ENCODE measurements at regions of chr1 and their contacts with region 1.

Region 1: DNA sequence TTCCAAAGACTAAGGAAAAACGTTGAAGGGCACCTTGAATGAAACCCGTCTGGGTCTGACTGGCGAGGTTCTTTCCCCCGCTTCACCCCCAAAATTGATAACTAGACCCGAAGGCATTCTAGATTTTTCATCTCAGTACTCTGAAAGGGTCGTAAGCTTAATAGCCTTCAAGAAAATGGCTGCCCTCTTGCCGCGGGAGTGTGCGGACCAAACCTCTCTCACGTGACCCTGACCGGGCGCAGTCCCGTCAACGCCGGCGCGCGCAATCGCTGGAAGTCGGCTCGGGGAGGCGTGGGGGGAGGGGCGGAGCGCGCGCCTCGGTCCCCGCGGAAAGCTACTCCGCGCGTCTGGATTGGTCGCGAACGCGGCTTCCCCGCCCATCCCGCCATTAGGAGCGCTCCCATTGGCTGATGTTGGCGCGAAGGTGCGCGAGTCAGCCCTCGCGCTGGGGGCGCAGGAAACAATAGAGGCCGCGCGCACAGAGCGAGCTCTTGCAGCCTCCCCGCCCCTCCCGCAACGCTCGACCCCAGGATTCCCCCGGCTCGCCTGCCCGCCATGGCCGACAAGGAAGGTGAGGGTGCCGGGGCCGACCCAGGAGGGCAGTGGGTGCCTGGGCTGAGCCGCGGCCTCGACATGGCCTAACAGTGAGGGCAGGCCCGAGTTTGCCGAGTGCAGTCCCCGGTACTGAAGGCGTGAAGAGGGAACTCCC is at the start of gene RBBP4:
- DNase-seq: peak; percentile 96 to 100 (median 99)
- ATAC-seq: peak; percentile 83
- H3K4me3 ChIP-seq: peak within 1 kb of the TSS; percentile 82 to 97
- H3K4me3 Mint-ChIP-seq: peak within 1 kb of the TSS; percentile 93
- H3K27ac ChIP-seq: peak within 1 kb of the TSS; percentile 98 to 99
- H3K27ac Mint-ChIP-seq: peak within 1 kb of the TSS; percentile 99
- H3K4me1 ChIP-seq: peaks cover 51% of the 10 kb centered on the region
- H3K4me1 Mint-ChIP-seq: peaks cover 60% of the 10 kb centered on the region
- H3K27me3 ChIP-seq: no peaks in the 10 kb centered on the region
- H3K27me3 Mint-ChIP-seq: no peaks in the 10 kb centered on the region
- CTCF ChIP-seq: no peak
- total RNA-seq, gene RBBP4: 109 to 121 TPM

Region 2: DNA sequence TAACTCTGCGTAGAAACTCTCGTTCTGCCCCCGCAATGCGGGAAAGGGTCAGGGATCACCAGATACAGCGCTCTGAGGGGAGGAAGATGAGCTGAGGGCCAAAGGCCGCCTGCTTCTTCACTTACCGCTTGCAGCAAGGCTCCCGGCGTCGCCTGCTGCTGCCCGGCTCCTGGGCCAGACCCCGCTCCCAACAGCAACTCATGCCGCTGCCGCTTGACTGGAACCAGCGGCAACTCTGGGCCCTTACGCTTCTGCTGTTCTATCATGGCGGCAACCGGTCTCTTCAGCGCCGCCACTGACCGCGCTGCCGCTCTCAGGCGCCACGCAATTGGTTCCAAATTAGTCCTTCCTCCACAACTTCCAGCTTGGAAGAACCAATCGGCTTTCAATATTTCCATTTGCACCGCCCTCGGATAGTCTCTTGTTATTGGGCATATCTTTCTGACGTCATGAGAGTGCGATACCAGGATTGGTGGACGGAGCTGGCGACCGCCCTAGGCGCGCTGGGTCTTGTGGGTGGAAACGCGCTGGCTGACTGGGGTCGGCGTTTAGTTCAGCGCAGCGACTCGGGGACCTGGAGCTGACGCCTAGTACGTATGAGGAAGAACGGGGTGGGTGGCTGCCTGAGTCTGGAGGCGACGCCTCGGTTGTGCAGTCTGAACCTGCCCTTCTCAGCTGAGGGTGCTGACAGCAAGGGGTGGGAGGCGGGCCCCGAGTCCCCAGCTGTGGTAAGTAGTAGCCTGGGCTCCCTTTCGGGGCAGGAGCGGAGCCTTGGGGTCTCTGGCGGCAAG is 1354.2 kb before region 1 on chr1 and contains the starts of genes SNRNP40 and ZCCHC17:
- CTCF ChIA-PET with region 1: no interaction called
- POLR2A ChIA-PET with region 1: no interaction called
- intact Hi-C with region 1: loop called in 1 of 2 experiments (anchors 10 kb)
- DNase-seq: peak; percentile 85 to 99 (median 91)
- ATAC-seq: peak; percentile 90
- H3K4me3 ChIP-seq: peak within 1 kb of the TSS; percentile 67 to 83
- H3K4me3 Mint-ChIP-seq: no peak within 1 kb of the TSS
- H3K27ac ChIP-seq: peak within 1 kb of the TSS; percentile 90 to 92
- H3K27ac Mint-ChIP-seq: no peak within 1 kb of the TSS
- H3K4me1 ChIP-seq: peaks cover 31% of the 10 kb centered on the region
- H3K4me1 Mint-ChIP-seq: peaks cover 35% of the 10 kb centered on the region
- H3K27me3 ChIP-seq: no peaks in the 10 kb centered on the region
- H3K27me3 Mint-ChIP-seq: no peaks in the 10 kb centered on the region
- CTCF ChIP-seq: no peak
- total RNA-seq, gene SNRNP40: 78.3 to 81.9 TPM
- total RNA-seq, gene ZCCHC17: 7.2 to 8.0 TPM

Region 3: GRCh38 chr1:32107742-32108661 is 542.9 kb before region 1 on chr1 and contains the start of gene KPNA6:
- CTCF ChIA-PET with region 1: interaction called, 3 read pairs
- POLR2A ChIA-PET with region 1: interaction called, 6 read pairs
- intact Hi-C with region 1: loop called in 1 of 2 experiments (anchors 2 kb)
- DNase-seq: peak; percentile 83 to 98 (median 90)
- ATAC-seq: peak; percentile 89
- H3K4me3 ChIP-seq: peak within 1 kb of the TSS; percentile 87 to 95
- H3K4me3 Mint-ChIP-seq: peak within 1 kb of the TSS; percentile 98
- H3K27ac ChIP-seq: peak within 1 kb of the TSS; percentile 84 to 93
- H3K27ac Mint-ChIP-seq: peak within 1 kb of the TSS; percentile 98
- H3K4me1 ChIP-seq: peaks cover 45% of the 10 kb centered on the region
- H3K4me1 Mint-ChIP-seq: peaks cover 50% of the 10 kb centered on the region
- H3K27me3 ChIP-seq: no peaks in the 10 kb centered on the region
- H3K27me3 Mint-ChIP-seq: no peaks in the 10 kb centered on the region
- CTCF ChIP-seq: no peak
- total RNA-seq, gene KPNA6: 51.7 to 58.7 TPM

Region 4: GRCh38 chr1:32179443-32180185 is 471.3 kb before region 1 on chr1 and contains the start of gene TXLNA:
- CTCF ChIA-PET with region 1: no interaction called
- POLR2A ChIA-PET with region 1: no interaction called
- intact Hi-C with region 1: loop called in 1 of 2 experiments (anchors 2 kb)
- DNase-seq: peak; percentile 66 to 93 (median 88)
- ATAC-seq: peak; percentile 88
- H3K4me3 ChIP-seq: peak within 1 kb of the TSS; percentile 67 to 85
- H3K4me3 Mint-ChIP-seq: peak within 1 kb of the TSS; percentile 84
- H3K27ac ChIP-seq: peak within 1 kb of the TSS; percentile 70 to 89
- H3K27ac Mint-ChIP-seq: peak within 1 kb of the TSS; percentile 93
- H3K4me1 ChIP-seq: peaks cover 26% of the 10 kb centered on the region
- H3K4me1 Mint-ChIP-seq: peaks cover 44% of the 10 kb centered on the region
- H3K27me3 ChIP-seq: no peaks in the 10 kb centered on the region
- H3K27me3 Mint-ChIP-seq: no peaks in the 10 kb centered on the region
- CTCF ChIP-seq: no peak
- total RNA-seq, gene TXLNA: 7.5 to 8.9 TPM

Region 5: GRCh38 chr1:32521165-32521564 is 129.7 kb before region 1 on chr1:
- CTCF ChIA-PET with region 1: interaction called, 3 read pairs
- POLR2A ChIA-PET with region 1: no interaction called
- intact Hi-C with region 1: loop called in 1 of 2 experiments (anchors 2 kb)
- DNase-seq: no peak
- ATAC-seq: no peak
- H3K4me3 ChIP-seq: no peak overlapping the region
- H3K4me3 Mint-ChIP-seq: peak overlapping the region; percentile 78
- H3K27ac ChIP-seq: no peak overlapping the region
- H3K27ac Mint-ChIP-seq: no peak overlapping the region
- H3K4me1 ChIP-seq: no peaks in the 10 kb centered on the region
- H3K4me1 Mint-ChIP-seq: peaks cover 7% of the 10 kb centered on the region
- H3K27me3 ChIP-seq: peaks cover 0 to 3% of the 10 kb centered on the region in 2 experiments
- H3K27me3 Mint-ChIP-seq: peaks cover 7% of the 10 kb centered on the region
- CTCF ChIP-seq: no peak

Region 6: GRCh38 chr1:32606565-32607371 is 44.1 kb before region 1 on chr1:
- CTCF ChIA-PET with region 1: no interaction called
- POLR2A ChIA-PET with region 1: no interaction called
- intact Hi-C with region 1: no loop called
- DNase-seq: no peak
- ATAC-seq: no peak
- H3K4me3 ChIP-seq: no peak overlapping the region
- H3K4me3 Mint-ChIP-seq: no peak overlapping the region
- H3K27ac ChIP-seq: no peak overlapping the region
- H3K27ac Mint-ChIP-seq: no peak overlapping the region
- H3K4me1 ChIP-seq: no peaks in the 10 kb centered on the region
- H3K4me1 Mint-ChIP-seq: no peaks in the 10 kb centered on the region
- H3K27me3 ChIP-seq: no peaks in the 10 kb centered on the region
- H3K27me3 Mint-ChIP-seq: no peaks in the 10 kb centered on the region
- CTCF ChIP-seq: no peak

Region 7: GRCh38 chr1:32964461-32965250 is 313.8 kb after region 1 on chr1 and contains the start of gene RNF19B:
- CTCF ChIA-PET with region 1: no interaction called
- POLR2A ChIA-PET with region 1: no interaction called
- intact Hi-C with region 1: loop called in 1 of 2 experiments (anchors 2 kb)
- DNase-seq: peak; percentile 89 to 97 (median 93)
- ATAC-seq: peak; percentile 93
- H3K4me3 ChIP-seq: peak within 1 kb of the TSS; percentile 68 to 70
- H3K4me3 Mint-ChIP-seq: peak within 1 kb of the TSS; percentile 88
- H3K27ac ChIP-seq: peak within 1 kb of the TSS; percentile 51 to 75
- H3K27ac Mint-ChIP-seq: peak within 1 kb of the TSS; percentile 91
- H3K4me1 ChIP-seq: peaks cover 24% of the 10 kb centered on the region
- H3K4me1 Mint-ChIP-seq: peaks cover 38% of the 10 kb centered on the region
- H3K27me3 ChIP-seq: peaks cover 0 to 3% of the 10 kb centered on the region in 2 experiments
- H3K27me3 Mint-ChIP-seq: no peaks in the 10 kb centered on the region
- CTCF ChIP-seq: no peak
- total RNA-seq, gene RNF19B: 43.9 to 44.6 TPM

Region 8: DNA sequence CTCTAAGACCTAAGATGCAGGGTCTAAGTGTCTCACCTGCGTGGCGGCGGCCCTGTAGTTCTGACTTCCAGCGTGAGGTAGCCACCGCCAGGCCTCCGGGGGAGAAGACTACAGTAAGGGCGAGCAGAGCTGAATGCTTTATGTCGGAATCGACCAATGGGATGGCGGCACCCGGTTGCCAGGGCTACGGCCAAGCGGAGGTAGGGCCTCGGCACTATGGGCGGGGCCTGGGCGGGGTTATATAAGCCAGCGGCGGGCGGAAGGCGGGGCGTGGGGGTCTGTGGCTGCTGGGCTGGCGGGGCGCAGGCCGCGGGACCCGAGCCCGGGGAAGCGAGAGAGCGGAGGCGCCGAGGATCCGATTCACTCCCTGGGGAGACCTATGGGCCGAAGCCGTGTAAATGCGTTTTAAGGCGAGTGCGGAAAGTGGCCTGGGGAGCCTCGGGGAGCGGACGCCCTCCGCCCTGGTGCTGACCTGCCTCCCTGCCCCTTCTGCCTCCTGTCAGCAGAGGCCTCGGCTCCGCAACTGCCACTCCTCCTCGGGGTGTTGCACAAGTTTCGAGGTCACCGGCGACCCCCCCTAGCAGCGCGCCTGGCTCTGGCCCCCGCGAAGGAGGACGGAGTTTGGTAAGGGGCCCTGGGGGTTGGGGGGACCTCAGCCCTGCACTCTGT is 430.1 kb after region 1 on chr1 and contains the start of gene AZIN2:
- CTCF ChIA-PET with region 1: no interaction called
- POLR2A ChIA-PET with region 1: no interaction called
- intact Hi-C with region 1: loop called in 1 of 2 experiments (anchors 2 kb)
- DNase-seq: peak; percentile 92 to 100 (median 97)
- ATAC-seq: peak; percentile 99
- H3K4me3 ChIP-seq: peak within 1 kb of the TSS; percentile 57 to 89
- H3K4me3 Mint-ChIP-seq: peak within 1 kb of the TSS; percentile 82
- H3K27ac ChIP-seq: peak within 1 kb of the TSS; percentile 28 to 54
- H3K27ac Mint-ChIP-seq: peak within 1 kb of the TSS; percentile 82
- H3K4me1 ChIP-seq: peaks cover 22% of the 10 kb centered on the region
- H3K4me1 Mint-ChIP-seq: peaks cover 29% of the 10 kb centered on the region
- H3K27me3 ChIP-seq: peaks cover 0 to 2% of the 10 kb centered on the region in 2 experiments
- H3K27me3 Mint-ChIP-seq: no peaks in the 10 kb centered on the region
- CTCF ChIP-seq: no peak
- total RNA-seq, gene AZIN2: 3.5 to 4.1 TPM